CD14-positive monocyte (primary cell): ENCODE measurements at regions of chr13 and their contacts with region 1.

Region 1: GRCh38 chr13:50244713-50245574 is 229.7 kb downstream of the KCNRG start:
- DNase-seq: peak; percentile 73 to 87 (median 78)
- H3K4me3 ChIP-seq: no peak overlapping the region
- H3K4me3 Mint-ChIP-seq: no peak overlapping the region
- H3K27ac ChIP-seq: peak overlapping the region in 1 of 2 donors; percentile 63
- H3K27ac Mint-ChIP-seq: peak overlapping the region in 6 of 7 donors; percentile 3 to 86 (median 70)
- H3K4me1 ChIP-seq: peaks cover 19 to 27% of the 10 kb centered on the region in 2 donors
- H3K4me1 Mint-ChIP-seq: peaks cover 38% of the 10 kb centered on the region
- H3K27me3 ChIP-seq: no peaks in the 10 kb centered on the region
- H3K27me3 Mint-ChIP-seq: peaks cover 0 to 2% (median 0%) of the 10 kb centered on the region in 3 donors
- CTCF ChIP-seq: no peak

Region 2: GRCh38 chr13:50290186-50290585 is 45.2 kb after region 1 on chr13:
- intact Hi-C with region 1: loop called in 1 of 2 experiments (anchors 5 kb)
- DNase-seq: peak; percentile 73 to 92 (median 90)
- H3K4me3 ChIP-seq: peak overlapping the region in 1 of 3 experiments; percentile 37
- H3K4me3 Mint-ChIP-seq: no peak overlapping the region
- H3K27ac ChIP-seq: peak overlapping the region; percentile 57 to 85
- H3K27ac Mint-ChIP-seq: peak overlapping the region; percentile 78 to 96 (median 93)
- H3K4me1 ChIP-seq: peaks cover 53 to 66% of the 10 kb centered on the region in 2 donors
- H3K4me1 Mint-ChIP-seq: peaks cover 64% of the 10 kb centered on the region
- H3K27me3 ChIP-seq: no peaks in the 10 kb centered on the region
- H3K27me3 Mint-ChIP-seq: no peaks in the 10 kb centered on the region
- CTCF ChIP-seq: no peak